ENCODE measurements at regions of chr12 and their contacts with region 1.

Region 1: DNA sequence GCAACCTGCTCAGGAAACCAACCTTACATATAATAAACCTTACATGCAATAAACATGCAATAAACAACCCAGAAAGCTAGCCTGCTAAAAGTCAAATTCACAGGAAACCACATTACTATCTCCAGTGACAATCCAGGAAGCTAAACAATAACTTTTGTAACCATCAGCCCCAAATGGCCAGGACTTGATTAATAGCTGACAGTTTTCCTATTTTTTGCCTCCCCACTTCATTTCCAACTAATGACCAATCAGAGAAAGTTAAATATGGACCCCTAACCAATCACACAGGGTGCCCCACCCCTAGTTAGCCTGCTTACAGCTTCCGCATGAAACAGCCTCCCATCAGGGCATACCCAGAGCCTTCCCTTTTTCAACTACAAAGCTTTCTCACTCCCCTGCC is 152.2 kb upstream of the LMNTD1 start:
- DNase-seq: no peak
- H3K4me3 ChIP-seq: no peak overlapping the region
- H3K27ac ChIP-seq: no peak overlapping the region
- H3K4me1 ChIP-seq: no peaks in the 10 kb centered on the region
- H3K27me3 ChIP-seq: no peaks in the 10 kb centered on the region
- CTCF ChIP-seq: no peak

Region 2: DNA sequence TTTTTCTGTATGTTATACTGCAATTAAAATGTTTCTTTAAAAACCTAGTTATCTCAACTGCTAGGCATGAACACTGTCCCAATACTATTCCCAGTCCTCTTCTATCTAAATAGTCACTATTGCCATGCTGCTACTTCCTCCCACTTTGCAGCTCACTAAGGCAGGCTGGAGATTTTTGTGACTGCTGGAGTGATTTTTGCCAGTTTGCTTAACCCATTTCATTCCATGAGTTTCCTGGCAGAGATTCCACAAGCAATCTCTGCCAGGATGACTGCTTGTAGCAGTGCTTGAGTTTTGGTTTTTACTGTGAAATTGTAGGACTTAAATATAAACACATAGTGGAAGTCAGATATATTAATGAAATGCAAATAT is 338.7 kb after region 1 on chr12:
- intact Hi-C with region 1: loop called (anchors 5 kb)
- DNase-seq: no peak
- H3K4me3 ChIP-seq: no peak overlapping the region
- H3K27ac ChIP-seq: no peak overlapping the region
- H3K4me1 ChIP-seq: peaks cover 51% of the 10 kb centered on the region
- H3K27me3 ChIP-seq: no peaks in the 10 kb centered on the region
- CTCF ChIP-seq: no peak